ENCODE measurements at regions of chr5 and their contacts with region 1.

Region 1: DNA sequence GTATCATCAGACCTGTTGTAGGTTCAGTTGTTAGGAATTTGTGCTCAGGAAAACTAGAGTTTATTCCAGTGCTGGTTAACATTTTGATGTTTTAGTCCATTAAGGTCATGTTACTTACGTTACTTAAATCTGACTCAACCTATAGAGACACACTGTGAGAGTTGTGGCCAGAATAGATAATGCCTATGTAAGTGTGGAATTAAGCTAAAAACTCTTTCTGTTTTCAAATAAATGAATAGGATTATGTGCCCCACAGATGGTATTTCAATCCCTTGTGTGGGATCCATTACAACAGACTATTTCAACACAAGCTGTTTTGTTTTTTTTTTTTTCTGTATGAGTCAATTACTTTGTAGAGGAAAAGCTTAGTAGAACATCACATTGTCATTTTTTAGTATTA is 68.1 kb downstream of the MEGF10 start:
- DNase-seq: no peak

Region 2: DNA sequence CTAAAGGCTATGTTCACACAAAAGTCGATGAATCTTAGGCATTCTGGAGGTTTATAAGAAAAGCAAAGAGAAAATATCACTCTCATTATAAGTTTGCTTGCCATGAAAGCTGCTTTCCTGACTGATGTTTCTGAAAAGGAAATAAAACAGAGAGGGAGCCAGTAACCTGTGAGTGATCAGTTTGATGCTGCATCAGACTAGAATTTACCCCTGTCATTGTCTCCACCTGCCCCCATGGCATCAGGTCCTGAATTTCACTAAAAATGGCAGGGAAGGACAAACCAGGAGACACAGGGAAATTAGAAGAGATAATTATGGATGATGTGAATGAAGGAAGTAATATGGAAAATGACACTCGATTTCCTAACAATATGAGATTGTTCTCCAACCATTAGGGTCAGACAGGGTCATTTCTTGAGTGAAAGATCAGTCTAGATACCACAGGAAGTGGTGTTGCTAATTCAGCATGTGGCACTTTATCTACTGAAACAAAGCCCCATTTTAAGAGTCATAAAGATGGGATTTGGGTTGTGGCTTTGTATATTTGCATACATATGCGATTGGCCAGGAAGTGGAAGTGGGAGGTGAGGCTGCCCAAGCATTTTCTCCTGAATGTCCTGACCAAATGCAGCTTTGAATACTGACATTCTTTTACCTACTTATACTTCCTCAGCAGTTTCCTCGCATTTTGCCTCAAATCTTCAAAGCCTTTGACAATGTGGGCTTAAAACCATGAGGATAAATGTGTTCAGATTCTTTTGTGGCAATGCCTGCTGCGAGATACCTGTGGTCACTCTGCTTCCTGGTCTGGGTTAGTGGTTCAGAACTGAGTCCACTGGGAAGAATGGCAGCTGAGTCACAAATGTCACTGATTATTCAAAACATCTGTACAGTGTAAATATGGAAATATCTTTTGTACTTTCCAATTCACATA is 38.4 kb before region 1 on chr5:
- intact Hi-C with region 1: no loop called
- DNase-seq: no peak

Region 3: DNA sequence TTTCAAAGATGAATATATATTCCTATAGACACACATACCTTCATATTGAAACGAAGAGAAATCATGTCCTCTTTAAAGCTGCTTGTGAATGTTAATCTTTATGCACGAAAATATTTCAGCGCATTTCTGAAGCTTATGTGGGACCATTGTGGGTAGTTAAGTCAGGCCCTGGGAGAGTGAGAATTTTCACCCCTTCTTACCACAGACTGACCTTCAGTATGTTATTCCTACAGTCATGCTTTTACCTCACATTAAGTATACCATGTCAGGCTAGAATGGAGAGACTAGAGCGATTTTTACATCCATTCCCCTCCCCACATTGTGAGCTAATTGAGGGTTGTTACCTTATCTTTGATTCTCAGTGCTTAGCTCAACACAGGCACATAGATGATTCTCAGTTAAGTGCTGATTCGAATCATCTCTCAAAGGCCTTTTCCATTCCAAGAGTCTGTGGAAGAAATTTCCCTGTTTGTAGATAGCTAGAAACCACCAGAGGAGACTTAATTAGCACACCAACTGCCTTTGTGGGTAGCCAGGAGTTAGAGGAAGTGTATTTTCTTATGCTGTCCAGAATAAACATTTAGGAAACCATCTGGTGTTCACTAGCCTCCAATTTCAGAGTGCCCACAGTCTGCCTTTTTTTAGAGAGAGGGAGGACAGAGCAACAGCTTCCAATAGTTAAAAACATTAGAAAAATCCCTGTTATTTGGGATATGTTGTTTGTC is 42.4 kb after region 1 on chr5:
- intact Hi-C with region 1: loop called in 1 of 2 experiments (anchors 2 kb)
- DNase-seq: no peak

Measured in posterior vena cava (tissue), 2 donors.